Activated B cell treated with CpG ODN at 0.5 μM for 24 hours (primary cell): ENCODE measurements at regions of chr10 and their contacts with region 1.

Region 1: GRCh38 chr10:60964257-60965235 is 20.6 kb upstream of the RHOBTB1 start:
- DNase-seq: no peak
- ATAC-seq: peak; percentile 59
- H3K4me3 Mint-ChIP-seq: no peak overlapping the region
- H3K27ac Mint-ChIP-seq: no peak overlapping the region
- H3K4me1 Mint-ChIP-seq: peaks cover 22% of the 10 kb centered on the region
- H3K27me3 Mint-ChIP-seq: peaks cover 8% of the 10 kb centered on the region
- CTCF ChIP-seq: peak; percentile 85

Region 2: GRCh38 chr10:60114765-60115586 is 849.6 kb before region 1 on chr10:
- CTCF ChIA-PET with region 1: no interaction called
- POLR2A ChIA-PET with region 1: no interaction called
- intact Hi-C with region 1: loop called (anchors 5 kb)
- DNase-seq: no peak
- ATAC-seq: peak; percentile 64
- H3K4me3 Mint-ChIP-seq: no peak overlapping the region
- H3K27ac Mint-ChIP-seq: no peak overlapping the region
- H3K4me1 Mint-ChIP-seq: no peaks in the 10 kb centered on the region
- H3K27me3 Mint-ChIP-seq: no peaks in the 10 kb centered on the region
- CTCF ChIP-seq: no peak

Region 3: DNA sequence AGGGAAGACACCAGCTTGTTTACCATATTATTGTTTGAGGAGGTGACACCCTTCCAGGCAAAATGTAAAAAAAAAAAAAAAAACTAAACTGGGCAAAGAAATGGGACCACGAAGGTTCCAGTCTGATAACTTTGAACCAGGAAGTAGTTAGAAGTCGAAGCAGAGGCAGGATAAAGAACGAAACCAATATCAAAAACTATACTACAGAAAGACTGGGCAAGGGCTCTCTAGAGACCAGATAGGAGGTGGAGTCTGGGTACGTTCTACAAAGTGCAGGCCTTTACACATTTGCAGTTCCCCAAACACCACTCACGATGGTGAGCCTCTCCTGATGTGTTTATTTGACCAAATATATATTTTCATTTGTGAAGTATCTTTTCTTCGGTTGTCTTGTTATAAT is 311.9 kb before region 1 on chr10:
- CTCF ChIA-PET with region 1: no interaction called
- POLR2A ChIA-PET with region 1: no interaction called
- intact Hi-C with region 1: loop called (anchors 10 kb)
- DNase-seq: no peak
- ATAC-seq: peak; percentile 100
- H3K4me3 Mint-ChIP-seq: peak overlapping the region; percentile 28
- H3K27ac Mint-ChIP-seq: peak overlapping the region; percentile 64
- H3K4me1 Mint-ChIP-seq: peaks cover 14% of the 10 kb centered on the region
- H3K27me3 Mint-ChIP-seq: no peaks in the 10 kb centered on the region
- CTCF ChIP-seq: no peak

Region 4: DNA sequence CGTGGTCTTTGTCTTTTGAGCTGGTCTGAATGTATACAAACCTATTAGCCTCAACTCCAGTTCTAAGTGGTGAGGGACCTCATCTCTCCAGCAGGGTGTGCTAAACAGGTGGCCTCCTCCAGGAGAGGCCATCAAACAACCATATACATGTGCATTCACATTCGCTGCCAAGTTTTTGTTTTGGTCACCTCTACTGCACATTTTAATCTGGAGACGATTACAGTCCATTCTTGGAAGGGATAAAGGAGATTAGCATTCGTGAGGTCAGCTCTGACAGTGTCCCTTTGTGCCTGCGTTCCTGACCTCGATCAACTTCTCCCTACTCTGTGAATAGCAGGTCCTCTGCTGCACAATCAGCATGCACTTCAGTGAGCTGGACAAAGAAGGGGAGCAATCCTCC is 81.4 kb before region 1 on chr10:
- CTCF ChIA-PET with region 1: interaction called, 6 read pairs
- POLR2A ChIA-PET with region 1: no interaction called
- intact Hi-C with region 1: loop called (anchors 1 kb)
- DNase-seq: no peak
- ATAC-seq: peak; percentile 40
- H3K4me3 Mint-ChIP-seq: no peak overlapping the region
- H3K27ac Mint-ChIP-seq: no peak overlapping the region
- H3K4me1 Mint-ChIP-seq: no peaks in the 10 kb centered on the region
- H3K27me3 Mint-ChIP-seq: no peaks in the 10 kb centered on the region
- CTCF ChIP-seq: no peak

Region 5: GRCh38 chr10:61000769-61001730 is 36.5 kb after region 1 on chr10:
- CTCF ChIA-PET with region 1: no interaction called
- POLR2A ChIA-PET with region 1: no interaction called
- intact Hi-C with region 1: no loop called
- DNase-seq: no peak
- ATAC-seq: no peak
- H3K4me3 Mint-ChIP-seq: peak overlapping the region; percentile 17
- H3K27ac Mint-ChIP-seq: no peak overlapping the region
- H3K4me1 Mint-ChIP-seq: peaks cover 8% of the 10 kb centered on the region
- H3K27me3 Mint-ChIP-seq: peaks cover 37% of the 10 kb centered on the region
- CTCF ChIP-seq: no peak

Region 6: DNA sequence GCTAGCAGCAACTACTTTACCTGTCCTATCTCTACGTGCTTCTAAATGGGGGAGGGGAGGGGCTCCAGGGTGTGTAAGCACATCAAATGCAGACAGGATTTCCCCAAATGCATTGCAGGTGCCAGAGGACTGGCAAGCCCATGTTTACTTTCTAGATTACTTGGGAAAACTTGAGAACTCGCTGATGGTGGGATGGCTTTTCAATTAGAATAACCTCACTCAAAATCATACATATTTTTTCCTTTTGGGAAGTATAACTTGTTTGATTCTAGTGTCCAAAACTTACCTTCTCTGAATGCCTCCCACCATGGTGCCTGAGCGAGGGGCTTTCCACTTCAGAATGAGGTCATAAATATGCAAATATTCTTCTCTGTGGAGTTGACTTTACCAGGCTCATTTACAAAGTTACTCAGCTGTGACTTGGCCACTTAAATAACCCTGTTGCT is 170.8 kb after region 1 on chr10:
- CTCF ChIA-PET with region 1: no interaction called
- POLR2A ChIA-PET with region 1: no interaction called
- intact Hi-C with region 1: loop called (anchors 5 kb)
- DNase-seq: peak; percentile 19
- ATAC-seq: peak; percentile 94
- H3K4me3 Mint-ChIP-seq: peak overlapping the region; percentile 68
- H3K27ac Mint-ChIP-seq: peak overlapping the region; percentile 91
- H3K4me1 Mint-ChIP-seq: peaks cover 43% of the 10 kb centered on the region
- H3K27me3 Mint-ChIP-seq: no peaks in the 10 kb centered on the region
- CTCF ChIP-seq: no peak